AG04449 (cell line): ENCODE measurements at regions of chr13 and their contacts with region 1.

Region 1: GRCh38 chr13:102580552-102581169 is 16.1 kb upstream of the TPP2 start:
- DNase-seq: no peak
- H3K4me3 ChIP-seq: no peak overlapping the region
- CTCF ChIP-seq: peak; percentile 66

Region 2: DNA sequence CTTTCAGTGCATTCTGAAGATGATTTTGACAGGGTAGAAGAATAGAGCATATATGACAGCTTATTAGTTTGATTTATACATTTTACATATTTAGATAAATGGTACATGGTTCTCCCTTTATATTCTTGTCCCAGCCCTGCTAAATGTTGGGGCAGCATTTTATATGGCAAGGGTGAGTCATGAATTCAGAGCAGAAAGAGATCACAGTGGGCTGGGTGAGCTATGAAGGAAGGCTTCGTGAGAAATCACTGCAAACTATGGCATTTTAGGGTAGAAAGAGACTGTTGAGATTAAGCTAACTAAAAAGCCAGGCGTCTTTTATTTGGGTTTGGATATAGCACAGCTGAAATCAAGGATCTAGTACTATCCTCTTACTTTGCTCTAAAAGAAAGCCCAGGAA is 138.1 kb after region 1 on chr13:
- CTCF ChIA-PET with region 1: interaction called, 70 read pairs
- POLR2A ChIA-PET with region 1: no interaction called
- DNase-seq: no peak
- H3K4me3 ChIP-seq: no peak overlapping the region
- CTCF ChIP-seq: no peak

Region 3: DNA sequence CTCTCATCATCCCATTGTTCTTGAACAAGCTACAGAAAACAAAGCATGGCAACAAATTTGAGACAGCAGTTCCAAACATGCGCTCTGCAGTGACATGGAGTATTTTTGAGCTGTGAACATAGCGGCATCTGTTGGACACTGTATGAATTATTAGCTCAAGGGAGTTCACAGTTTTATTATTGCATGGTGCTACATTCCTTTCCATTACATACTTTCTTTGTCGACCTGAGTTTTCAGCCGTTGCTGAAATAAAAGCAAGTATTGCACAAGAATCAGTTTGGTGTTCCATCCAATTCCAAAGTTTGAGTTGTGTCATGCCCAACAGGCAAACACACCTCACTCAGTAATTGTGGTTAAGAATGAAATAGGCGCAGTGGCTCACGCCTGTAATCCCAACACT is 144.3 kb after region 1 on chr13:
- CTCF ChIA-PET with region 1: interaction called, 70 read pairs
- POLR2A ChIA-PET with region 1: no interaction called
- DNase-seq: peak; percentile 23
- H3K4me3 ChIP-seq: no peak overlapping the region
- CTCF ChIP-seq: peak; percentile 58

Region 4: DNA sequence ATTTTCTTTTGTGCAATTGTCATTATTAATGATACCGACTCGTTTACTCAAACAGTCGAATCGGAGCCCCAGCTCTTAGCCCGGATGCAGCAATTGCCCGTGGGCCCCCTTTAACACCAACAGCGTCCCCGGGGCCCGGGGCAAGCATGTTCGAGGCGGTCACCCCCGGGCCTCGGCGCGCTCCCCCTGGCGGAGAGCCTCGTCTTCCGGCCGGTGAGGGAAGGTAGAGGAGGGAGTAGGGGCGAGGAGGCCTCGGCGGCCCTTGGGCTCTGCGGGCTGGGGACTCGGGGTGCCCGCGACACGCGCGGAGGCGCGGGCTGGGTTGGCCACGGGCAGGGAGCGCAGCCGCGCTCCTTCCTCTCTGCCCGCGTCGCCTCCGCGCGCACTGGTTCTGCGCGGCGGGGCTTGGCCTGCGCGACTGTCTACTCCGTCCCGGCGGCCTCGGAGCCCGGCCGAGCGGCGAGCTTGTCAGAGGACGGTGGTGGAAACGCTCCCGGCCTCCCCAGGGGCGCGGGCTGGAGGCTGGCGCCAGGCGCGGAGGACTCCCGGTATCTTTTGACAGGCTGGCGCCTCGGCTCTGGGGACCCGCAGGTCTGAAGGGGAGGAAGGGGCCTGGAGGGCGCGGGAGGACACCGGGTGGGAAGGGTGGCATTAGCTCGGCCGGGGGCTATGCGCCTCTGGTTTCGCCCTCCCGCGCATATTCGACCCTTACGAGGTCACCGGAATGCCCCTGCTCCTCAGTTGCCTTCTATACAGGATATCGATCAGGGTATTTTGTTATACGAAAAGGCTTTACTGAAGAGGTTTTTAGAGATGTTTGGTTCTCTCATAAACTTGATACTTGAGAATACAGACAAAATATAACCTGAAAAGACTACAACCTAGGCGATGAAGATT is 219.7 kb after region 1 on chr13:
- CTCF ChIA-PET with region 1: interaction called, 16 read pairs
- POLR2A ChIA-PET with region 1: no interaction called
- DNase-seq: no peak
- H3K4me3 ChIP-seq: peak overlapping the region; percentile 89
- CTCF ChIP-seq: peak; percentile 94

Region 5: GRCh38 chr13:102845630-102846260 is 265.1 kb after region 1 on chr13 and contains the start of gene ERCC5:
- CTCF ChIA-PET with region 1: interaction called, 55 read pairs
- POLR2A ChIA-PET with region 1: interaction called, 3 read pairs
- DNase-seq: peak; percentile 74
- H3K4me3 ChIP-seq: peak within 1 kb of the TSS; percentile 95
- CTCF ChIP-seq: no peak